Naive thymus-derived CD4-positive, alpha-beta T cell (primary cell): ENCODE measurements at regions of chr15 and their contacts with region 1.

Region 1: DNA sequence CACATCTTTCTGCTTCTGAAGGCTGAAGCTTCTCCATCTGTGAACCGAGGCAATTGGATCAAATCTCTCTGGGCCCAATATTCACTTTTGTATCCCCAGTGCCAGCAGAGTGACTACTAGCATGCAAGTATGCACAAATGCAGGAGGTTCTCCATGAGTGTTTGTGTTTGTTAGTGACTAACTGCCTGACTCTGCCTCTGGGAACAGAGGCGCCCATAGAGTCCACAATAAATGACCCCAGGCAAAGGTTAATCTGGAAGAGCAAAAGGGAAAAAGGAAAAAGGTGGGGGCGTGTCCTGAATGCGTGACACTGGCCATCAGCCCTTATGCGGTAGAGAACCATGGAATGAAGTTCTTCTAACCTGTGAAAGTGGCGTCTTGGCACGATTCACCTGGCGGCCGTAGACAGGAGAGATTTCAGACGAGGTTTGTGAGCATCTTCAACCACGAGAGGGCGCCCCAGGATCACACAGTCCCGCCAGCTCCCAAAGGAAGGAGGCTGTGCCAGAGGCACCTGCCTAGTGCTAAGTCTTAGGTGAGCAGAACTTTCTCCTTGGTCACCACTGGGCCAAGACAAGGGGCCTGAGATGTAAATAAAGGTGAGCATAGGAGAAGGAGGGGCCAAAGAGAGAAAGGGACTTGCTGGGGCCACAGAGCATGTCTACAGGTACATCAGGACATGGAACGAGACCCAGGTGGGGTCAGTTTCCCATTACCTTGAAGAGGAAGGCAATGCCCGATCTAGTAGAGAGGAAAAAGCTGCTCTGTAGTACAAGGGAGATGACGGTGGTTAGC is 44.2 kb downstream of the RBPMS2 start:
- DNase-seq: peak; percentile 65 to 86 (median 77)
- ATAC-seq: peak; percentile 87
- H3K4me3 ChIP-seq: no peak overlapping the region
- H3K4me3 Mint-ChIP-seq: peak overlapping the region in 2 of 10 donors; percentile 4 to 46
- H3K27ac ChIP-seq: no peak overlapping the region
- H3K27ac Mint-ChIP-seq: peak overlapping the region in 1 of 9 donors; percentile 57
- H3K4me1 ChIP-seq: no peaks in the 10 kb centered on the region
- H3K4me1 Mint-ChIP-seq: peaks cover 8 to 12% (median 10%) of the 10 kb centered on the region in 7 donors
- H3K27me3 ChIP-seq: no peaks in the 10 kb centered on the region
- H3K27me3 Mint-ChIP-seq: peaks cover 0 to 5% (median 4%) of the 10 kb centered on the region in 5 donors

Region 2: DNA sequence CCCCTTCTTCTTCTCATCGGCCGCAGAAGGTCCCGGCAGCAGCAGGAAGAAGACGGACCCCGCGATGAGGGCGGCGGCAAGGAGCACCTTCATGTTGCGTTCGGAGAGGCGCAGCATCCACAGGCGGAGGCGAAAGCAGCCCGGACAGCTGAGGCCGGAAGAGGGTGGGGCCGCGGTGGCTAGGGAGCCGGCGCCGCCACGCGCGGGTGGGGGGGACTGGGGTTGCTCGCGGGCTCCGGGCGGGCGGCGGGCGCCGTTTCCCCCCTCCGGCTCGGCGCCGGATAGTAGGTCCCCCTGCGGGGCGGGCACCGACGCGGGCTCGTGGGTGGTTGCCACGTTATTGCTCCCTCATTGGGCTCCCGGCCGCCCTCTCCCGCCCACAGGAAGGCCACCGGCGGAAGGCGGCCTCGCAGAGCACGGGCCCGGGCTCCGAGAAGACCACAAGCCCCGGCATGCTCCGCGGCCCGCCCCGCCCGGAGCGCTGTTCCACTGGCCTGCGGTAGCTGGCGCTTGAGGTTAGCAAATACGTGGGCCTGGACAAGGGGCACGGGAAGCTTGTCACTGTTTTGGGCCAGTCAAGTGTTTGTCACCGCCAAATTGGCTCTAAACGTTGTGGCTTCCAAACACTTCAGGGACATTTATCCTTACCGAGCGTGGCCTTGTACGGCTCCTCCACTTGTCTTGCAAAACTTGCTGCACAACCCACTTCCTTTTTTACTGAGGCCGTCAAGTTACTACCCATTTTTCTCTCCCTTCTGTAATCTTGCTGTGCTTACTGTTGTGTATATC is 568.1 kb before region 1 on chr15 and contains the start of gene PPIB:
- CTCF ChIA-PET with region 1: no interaction called
- POLR2A ChIA-PET with region 1: no interaction called
- intact Hi-C with region 1: loop called in 1 of 2 experiments (anchors 1 kb)
- DNase-seq: peak; percentile 89 to 98 (median 96)
- ATAC-seq: peak; percentile 97
- H3K4me3 ChIP-seq: peak within 1 kb of the TSS; percentile 76
- H3K4me3 Mint-ChIP-seq: peak within 1 kb of the TSS; percentile 80 to 97 (median 90)
- H3K27ac ChIP-seq: peak within 1 kb of the TSS; percentile 97
- H3K27ac Mint-ChIP-seq: peak within 1 kb of the TSS; percentile 83 to 97 (median 93)
- H3K4me1 ChIP-seq: peaks cover 17 to 29% of the 10 kb centered on the region in 2 donors
- H3K4me1 Mint-ChIP-seq: peaks cover 30 to 51% (median 46%) of the 10 kb centered on the region in 7 donors
- H3K27me3 ChIP-seq: no peaks in the 10 kb centered on the region
- H3K27me3 Mint-ChIP-seq: peaks cover 0 to 2% (median 0%) of the 10 kb centered on the region in 5 donors
- total RNA-seq, gene PPIB: 160 to 530 (median 184) TPM

Region 3: DNA sequence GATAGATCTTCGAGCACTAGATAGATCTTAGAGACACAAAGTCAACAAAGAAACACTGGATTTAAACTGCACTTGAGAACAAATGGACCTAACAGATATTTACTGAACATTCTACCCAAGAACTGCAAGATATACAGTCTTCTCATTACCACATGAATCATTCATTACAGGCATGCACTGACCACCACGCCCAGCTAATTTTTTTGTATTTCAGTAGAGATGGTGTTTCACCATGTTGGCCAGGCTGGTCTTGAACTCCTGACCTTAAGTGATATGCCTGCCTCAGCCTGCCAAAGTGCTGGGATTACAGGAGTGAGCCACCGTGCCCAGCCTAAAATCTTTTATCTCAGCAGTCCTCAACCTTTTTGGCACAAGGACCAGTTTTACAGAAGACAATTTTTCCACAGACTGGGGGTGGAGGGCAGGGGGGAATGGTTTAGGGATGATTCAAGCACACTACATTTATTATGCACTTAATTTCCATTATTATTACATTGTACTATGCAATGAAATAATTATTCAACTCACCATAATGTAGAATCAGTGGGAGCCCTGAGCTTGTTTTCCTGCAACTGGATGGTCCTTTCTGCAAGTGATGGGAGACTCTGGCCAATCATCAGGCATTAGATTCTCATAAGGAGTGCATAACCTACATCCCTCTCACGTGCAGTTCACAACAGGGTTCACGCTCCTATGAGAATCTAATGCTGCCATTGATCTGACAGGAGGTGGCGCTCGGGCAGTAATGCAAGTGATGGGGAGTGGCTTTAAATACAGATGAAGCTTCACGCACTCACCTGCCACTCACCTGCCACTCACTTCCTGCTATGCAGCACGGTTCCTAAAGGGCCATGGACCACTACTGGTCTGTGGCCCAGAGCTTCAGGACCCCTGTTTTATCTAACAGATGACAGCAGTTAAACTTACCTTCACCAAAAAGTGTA is 397.0 kb before region 1 on chr15:
- CTCF ChIA-PET with region 1: interaction called, 5 read pairs
- POLR2A ChIA-PET with region 1: no interaction called
- intact Hi-C with region 1: loop called in 1 of 2 experiments (anchors 5 kb)
- DNase-seq: peak in 7 of 9 donors; percentile 27 to 51 (median 37)
- ATAC-seq: peak; percentile 65
- H3K4me3 ChIP-seq: no peak overlapping the region
- H3K4me3 Mint-ChIP-seq: peak overlapping the region in 7 of 10 donors; percentile 13 to 46 (median 29)
- H3K27ac ChIP-seq: peak overlapping the region; percentile 42
- H3K27ac Mint-ChIP-seq: peak overlapping the region; percentile 60 to 91 (median 77)
- H3K4me1 ChIP-seq: peaks cover 4 to 14% of the 10 kb centered on the region in 2 donors
- H3K4me1 Mint-ChIP-seq: peaks cover 6 to 36% (median 29%) of the 10 kb centered on the region in 7 donors
- H3K27me3 ChIP-seq: no peaks in the 10 kb centered on the region
- H3K27me3 Mint-ChIP-seq: no peaks in the 10 kb centered on the region

Region 4: DNA sequence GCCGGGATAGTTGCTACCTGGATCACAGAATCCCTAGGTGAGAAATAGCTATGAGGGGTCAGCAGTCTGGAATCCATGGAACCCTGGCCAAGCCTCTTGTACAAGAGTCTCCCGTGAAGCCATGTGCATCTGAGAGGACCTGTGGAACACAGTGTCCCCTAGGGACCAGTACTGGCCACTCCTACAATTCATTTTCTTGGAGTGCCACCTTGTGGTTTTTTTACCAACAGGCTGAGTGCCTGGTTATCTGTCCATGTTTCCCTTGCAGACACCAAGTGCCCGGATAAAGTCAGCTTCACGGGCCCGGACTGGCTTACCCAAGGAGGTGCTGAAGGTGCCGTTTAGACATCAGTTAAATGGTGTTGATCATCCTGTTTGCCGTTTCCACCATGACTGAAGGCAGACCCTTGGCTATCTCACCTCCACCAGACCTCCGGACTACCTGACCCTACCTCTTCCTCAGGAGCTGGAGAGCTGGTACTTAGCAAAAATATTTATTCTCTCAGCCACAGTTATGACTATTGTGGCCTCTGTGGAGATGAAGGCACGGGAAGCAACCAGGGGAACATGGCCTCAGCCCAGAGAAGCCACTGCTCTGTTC is 49.7 kb before region 1 on chr15:
- CTCF ChIA-PET with region 1: interaction called, 211 read pairs
- POLR2A ChIA-PET with region 1: interaction called, 5 read pairs
- intact Hi-C with region 1: loop called (anchors 1 kb)
- DNase-seq: no peak
- ATAC-seq: peak; percentile 46
- H3K4me3 ChIP-seq: no peak overlapping the region
- H3K4me3 Mint-ChIP-seq: peak overlapping the region in 1 of 10 donors; percentile 53
- H3K27ac ChIP-seq: no peak overlapping the region
- H3K27ac Mint-ChIP-seq: peak overlapping the region in 6 of 9 donors; percentile 34 to 78 (median 61)
- H3K4me1 ChIP-seq: no peaks in the 10 kb centered on the region
- H3K4me1 Mint-ChIP-seq: peaks cover 0 to 31% (median 4%) of the 10 kb centered on the region in 7 donors
- H3K27me3 ChIP-seq: no peaks in the 10 kb centered on the region
- H3K27me3 Mint-ChIP-seq: no peaks in the 10 kb centered on the region

Region 5: DNA sequence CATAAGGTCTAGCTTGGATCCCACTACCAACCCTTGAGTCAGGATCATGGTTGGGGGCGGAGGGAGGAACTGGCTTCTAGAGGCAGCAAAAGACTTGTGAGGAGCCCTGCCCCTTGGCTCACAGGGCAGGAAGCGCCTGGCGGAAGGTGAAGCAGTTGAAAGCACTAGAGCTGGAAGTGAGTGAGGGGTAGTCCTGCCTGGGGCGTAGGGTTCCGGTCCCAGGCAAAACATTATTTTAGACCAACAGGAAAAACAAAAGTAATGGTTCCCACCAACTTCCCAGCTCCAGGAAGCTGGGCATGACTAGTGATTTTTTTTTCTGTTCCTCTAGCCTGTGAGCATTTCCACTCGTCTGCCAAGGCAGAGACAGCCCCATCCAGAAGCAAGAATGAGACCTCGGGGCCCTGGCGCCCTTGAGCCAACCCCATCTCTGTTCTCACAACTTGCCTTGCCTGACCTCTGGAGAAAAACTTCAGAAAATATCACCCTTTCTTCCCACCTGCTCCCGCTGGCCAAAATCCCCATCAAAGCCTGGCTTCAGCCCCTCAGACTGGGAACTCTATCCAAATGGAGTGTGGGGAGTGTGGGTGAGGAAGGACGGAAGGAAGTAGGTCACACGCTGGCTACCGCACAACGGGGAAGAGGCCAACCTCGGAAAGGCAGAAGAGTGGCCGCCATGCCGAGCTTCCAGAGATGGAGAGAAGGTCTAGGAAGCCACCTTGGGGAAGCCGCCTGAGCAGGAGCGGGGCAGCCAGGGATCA is 13.3 kb before region 1 on chr15:
- CTCF ChIA-PET with region 1: interaction called, 11 read pairs
- POLR2A ChIA-PET with region 1: interaction called, 3 read pairs
- intact Hi-C with region 1: no loop called
- DNase-seq: peak in 6 of 9 donors; percentile 20 to 54 (median 36)
- ATAC-seq: peak; percentile 60
- H3K4me3 ChIP-seq: no peak overlapping the region
- H3K4me3 Mint-ChIP-seq: peak overlapping the region in 9 of 10 donors; percentile 3 to 65 (median 45)
- H3K27ac ChIP-seq: peak overlapping the region; percentile 55
- H3K27ac Mint-ChIP-seq: peak overlapping the region in 8 of 9 donors; percentile 81 to 92 (median 88)
- H3K4me1 ChIP-seq: peaks cover 0 to 21% of the 10 kb centered on the region in 2 donors
- H3K4me1 Mint-ChIP-seq: peaks cover 6 to 31% (median 18%) of the 10 kb centered on the region in 7 donors
- H3K27me3 ChIP-seq: no peaks in the 10 kb centered on the region
- H3K27me3 Mint-ChIP-seq: no peaks in the 10 kb centered on the region

Region 6: GRCh38 chr15:64836023-64836536 is 104.9 kb after region 1 on chr15:
- CTCF ChIA-PET with region 1: interaction called, 4 read pairs
- POLR2A ChIA-PET with region 1: no interaction called
- intact Hi-C with region 1: loop called in 1 of 2 experiments (anchors 1 kb)
- DNase-seq: no peak
- ATAC-seq: no peak
- H3K4me3 ChIP-seq: no peak overlapping the region
- H3K4me3 Mint-ChIP-seq: peak overlapping the region; percentile 16 to 80 (median 72)
- H3K27ac ChIP-seq: peak overlapping the region; percentile 38
- H3K27ac Mint-ChIP-seq: peak overlapping the region; percentile 44 to 91 (median 81)
- H3K4me1 ChIP-seq: peaks cover 37 to 43% of the 10 kb centered on the region in 2 donors
- H3K4me1 Mint-ChIP-seq: peaks cover 42 to 56% (median 52%) of the 10 kb centered on the region in 7 donors
- H3K27me3 ChIP-seq: no peaks in the 10 kb centered on the region
- H3K27me3 Mint-ChIP-seq: no peaks in the 10 kb centered on the region

Region 7: DNA sequence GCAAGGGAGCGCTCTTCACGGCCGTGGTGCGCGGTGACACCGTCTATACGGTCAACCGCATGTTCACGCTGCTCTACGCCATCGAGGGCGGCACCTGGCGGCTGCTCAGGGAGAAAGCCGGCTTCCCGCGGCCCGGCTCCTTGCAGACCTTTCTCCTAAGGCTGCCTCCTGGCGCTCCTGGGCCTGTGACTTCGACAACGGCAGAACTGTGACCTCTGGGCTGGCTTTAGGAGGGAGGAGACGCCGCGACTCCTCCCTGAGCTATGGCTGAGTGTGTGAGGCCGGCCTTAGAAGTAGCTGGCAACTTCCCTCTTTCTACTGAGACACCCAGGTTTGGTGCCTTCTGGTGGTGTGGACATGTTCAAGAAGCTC is 346.8 kb after region 1 on chr15:
- CTCF ChIA-PET with region 1: no interaction called
- POLR2A ChIA-PET with region 1: no interaction called
- intact Hi-C with region 1: loop called (anchors 1 kb)
- DNase-seq: peak in 8 of 9 donors; percentile 18 to 54 (median 39)
- ATAC-seq: peak; percentile 74
- H3K4me3 ChIP-seq: no peak overlapping the region
- H3K4me3 Mint-ChIP-seq: peak overlapping the region in 7 of 10 donors; percentile 11 to 80 (median 52)
- H3K27ac ChIP-seq: no peak overlapping the region
- H3K27ac Mint-ChIP-seq: peak overlapping the region in 1 of 9 donors; percentile 74
- H3K4me1 ChIP-seq: peaks cover 0 to 11% of the 10 kb centered on the region in 2 donors
- H3K4me1 Mint-ChIP-seq: peaks cover 13 to 25% (median 19%) of the 10 kb centered on the region in 7 donors
- H3K27me3 ChIP-seq: no peaks in the 10 kb centered on the region
- H3K27me3 Mint-ChIP-seq: peaks cover 16 to 35% (median 32%) of the 10 kb centered on the region in 5 donors

Region 8: DNA sequence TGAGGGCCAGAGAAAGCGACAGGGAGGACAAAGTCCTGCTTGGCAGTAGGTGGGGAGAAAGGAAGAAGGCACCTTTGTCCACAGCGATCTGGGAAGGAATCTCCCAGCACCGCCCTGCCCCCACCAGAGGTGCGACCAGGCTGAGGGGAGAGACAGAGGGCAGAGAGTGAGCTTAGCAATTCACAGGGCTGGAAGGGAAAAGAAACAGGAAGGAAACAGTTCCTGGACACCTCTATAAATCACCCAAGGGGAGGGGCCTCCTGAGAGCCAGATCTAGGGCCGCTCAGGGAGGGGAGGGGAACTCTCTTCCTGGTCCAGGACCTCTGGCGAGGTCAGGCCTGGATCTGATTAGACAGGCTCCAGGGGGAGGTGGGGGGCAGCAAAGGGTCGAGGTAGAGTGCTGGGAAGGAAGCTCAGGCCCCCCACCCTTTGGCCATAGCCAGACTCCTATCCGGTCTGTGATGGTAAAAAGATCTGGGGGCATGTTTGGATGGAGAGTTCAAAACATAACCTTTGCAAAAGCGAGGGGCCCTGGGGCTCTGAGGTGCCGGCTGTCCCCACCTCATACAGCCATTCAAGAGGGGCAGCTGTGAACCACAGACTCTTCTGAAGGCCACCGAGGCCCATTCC is 608.8 kb after region 1 on chr15:
- CTCF ChIA-PET with region 1: no interaction called
- POLR2A ChIA-PET with region 1: no interaction called
- intact Hi-C with region 1: no loop called
- DNase-seq: no peak
- ATAC-seq: no peak
- H3K4me3 ChIP-seq: no peak overlapping the region
- H3K4me3 Mint-ChIP-seq: no peak overlapping the region
- H3K27ac ChIP-seq: no peak overlapping the region
- H3K27ac Mint-ChIP-seq: peak overlapping the region in 1 of 9 donors; percentile 58
- H3K4me1 ChIP-seq: no peaks in the 10 kb centered on the region
- H3K4me1 Mint-ChIP-seq: peaks cover 0 to 6% (median 0%) of the 10 kb centered on the region in 7 donors
- H3K27me3 ChIP-seq: no peaks in the 10 kb centered on the region
- H3K27me3 Mint-ChIP-seq: peaks cover 0 to 17% (median 5%) of the 10 kb centered on the region in 5 donors